ENCODE measurements at regions of chr17 and their contacts with region 1.

Region 1: DNA sequence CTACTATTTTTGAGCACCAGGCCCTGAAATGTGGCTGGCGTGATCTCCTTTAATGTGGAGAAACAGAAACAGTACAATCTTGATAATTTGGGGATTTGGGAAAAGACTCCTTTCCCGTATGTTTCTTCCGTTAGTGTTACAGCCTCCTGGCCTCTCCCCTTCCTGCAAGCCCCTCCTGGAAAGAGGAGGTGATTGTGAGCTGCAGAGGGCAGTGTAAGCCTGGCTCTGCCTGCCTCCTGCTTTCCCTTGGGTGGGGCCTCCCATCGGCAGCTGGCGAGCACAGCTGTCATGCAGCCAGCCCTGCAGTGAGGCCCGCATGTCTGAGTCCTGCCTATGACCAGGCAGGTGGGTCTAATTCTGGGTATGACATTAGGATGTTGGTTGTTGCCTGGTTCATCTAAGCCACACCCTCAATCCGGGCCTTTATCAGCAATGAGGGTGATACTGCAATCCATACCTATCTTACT is 48.7 kb upstream of the WSB1 start:
- DNase-seq: peak; percentile 90 to 95
- ATAC-seq: peak; percentile 87 to 95
- H3K4me3 ChIP-seq: no peak overlapping the region
- H3K27ac ChIP-seq: peak overlapping the region; percentile 72 to 85
- H3K4me1 ChIP-seq: peaks cover 61% of the 10 kb centered on the region
- CTCF ChIP-seq: peak; percentile 87
- EP300 ChIP-seq: no peak
- POLR2A ChIP-seq: no peak
- RAD21 ChIP-seq: peak; percentile 96 to 99

Region 2: GRCh38 chr17:27256225-27257030 is 11.2 kb after region 1 on chr17:
- CTCF ChIA-PET with region 1: interaction called, 19 read pairs
- POLR2A ChIA-PET with region 1: no interaction called
- DNase-seq: peak in 1 of 2 experiments; percentile 84
- ATAC-seq: peak; percentile 62 to 94
- H3K4me3 ChIP-seq: no peak overlapping the region
- H3K27ac ChIP-seq: peak overlapping the region; percentile 51 to 53
- H3K4me1 ChIP-seq: peaks cover 20% of the 10 kb centered on the region
- CTCF ChIP-seq: no peak
- EP300 ChIP-seq: 0 out of 5 replicates have a peak, but pooled peaks of 1 of the 2 experiments have one; percentile 12
- POLR2A ChIP-seq: no peak
- RAD21 ChIP-seq: no peak

Region 3: DNA sequence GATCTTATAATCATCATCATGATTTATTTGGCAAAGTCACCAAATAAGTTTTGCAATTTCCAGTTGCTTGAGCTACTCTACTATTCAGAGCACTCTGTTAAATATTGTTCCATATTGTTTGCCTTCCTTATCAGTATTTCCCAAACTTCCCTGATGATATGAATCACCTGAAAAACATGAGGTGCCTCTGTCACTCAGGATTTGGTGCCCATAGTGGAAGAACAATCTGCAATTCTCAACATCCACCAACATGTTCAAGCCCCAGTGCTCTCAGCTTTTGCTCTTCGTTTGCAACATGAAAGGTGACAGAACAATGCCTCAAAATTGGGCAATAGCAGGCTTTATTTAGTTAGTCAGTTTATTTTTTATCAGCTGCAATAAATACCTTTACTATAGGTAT is 20.1 kb after region 1 on chr17:
- CTCF ChIA-PET with region 1: interaction called, 19 read pairs
- POLR2A ChIA-PET with region 1: no interaction called
- DNase-seq: peak; percentile 53 to 64
- ATAC-seq: peak; percentile 66 to 88; a peak in 5 of 6 replicates
- H3K4me3 ChIP-seq: no peak overlapping the region
- H3K27ac ChIP-seq: peak overlapping the region in 1 of 2 experiments; percentile 49; a peak in 3 of 6 replicates
- H3K4me1 ChIP-seq: peaks cover 19% of the 10 kb centered on the region
- CTCF ChIP-seq: no peak
- EP300 ChIP-seq: peak in 1 of 2 experiments; percentile 19; a peak in 1 of 5 replicates
- POLR2A ChIP-seq: no peak
- RAD21 ChIP-seq: no peak

Region 4: DNA sequence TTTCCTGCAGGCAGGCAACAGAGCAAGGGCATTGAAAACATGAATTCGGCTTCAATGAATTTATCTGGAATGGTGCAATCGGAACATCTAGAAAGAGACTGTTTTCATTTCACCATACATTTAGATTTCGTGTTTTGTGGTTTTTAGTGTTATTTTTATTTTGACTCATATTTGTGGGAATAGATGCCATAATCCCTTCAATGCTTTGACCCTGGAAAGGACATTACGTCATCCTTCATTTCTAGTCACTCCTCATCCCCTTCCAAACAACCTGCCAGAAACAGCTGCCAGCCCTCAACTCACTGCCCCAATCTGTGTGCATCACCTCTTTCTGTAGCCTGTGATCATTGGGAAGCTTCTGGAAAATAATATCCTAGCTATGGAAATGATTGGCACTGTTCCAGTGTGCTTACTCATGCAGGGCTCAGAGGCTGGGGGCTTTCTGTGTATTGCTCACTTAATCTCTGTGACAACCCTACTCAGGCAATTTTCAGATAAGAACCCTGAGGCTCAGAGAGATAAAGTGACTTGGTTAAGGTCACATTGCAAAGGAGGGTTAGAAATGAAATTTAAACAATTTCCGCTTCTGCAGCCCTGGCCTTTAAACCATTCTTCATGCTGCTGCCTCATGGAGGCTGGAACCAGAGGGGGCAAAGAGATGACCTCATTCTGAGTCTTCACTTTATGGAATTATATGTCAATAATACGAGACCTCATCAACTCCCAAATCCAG is 201.5 kb after region 1 on chr17:
- CTCF ChIA-PET with region 1: no interaction called
- POLR2A ChIA-PET with region 1: no interaction called
- DNase-seq: peak in 1 of 2 experiments; percentile 38
- ATAC-seq: peak; percentile 45 to 67; a peak in 4 of 6 replicates
- H3K4me3 ChIP-seq: no peak overlapping the region
- H3K27ac ChIP-seq: peak overlapping the region in 1 of 2 experiments; percentile 60; a peak in 2 of 6 replicates
- H3K4me1 ChIP-seq: peaks cover 15% of the 10 kb centered on the region
- CTCF ChIP-seq: no peak
- EP300 ChIP-seq: no peak
- POLR2A ChIP-seq: no peak
- RAD21 ChIP-seq: no peak

Measured in A549 (cell line).